ENCODE measurements at regions of chr5 and their contacts with region 1.

Region 1: GRCh38 chr5:43105369-43106289 is 15.1 kb upstream of the ZNF131 start:
- DNase-seq: peak; percentile 98
- H3K4me3 ChIP-seq: peak overlapping the region in 2 of 3 experiments; percentile 20 to 29
- H3K27ac ChIP-seq: no peak overlapping the region
- H3K4me1 ChIP-seq: no peaks in the 10 kb centered on the region
- H3K27me3 ChIP-seq: no peaks in the 10 kb centered on the region
- CTCF ChIP-seq: peak; percentile 100
- POLR2A ChIP-seq: no peak

Region 2: DNA sequence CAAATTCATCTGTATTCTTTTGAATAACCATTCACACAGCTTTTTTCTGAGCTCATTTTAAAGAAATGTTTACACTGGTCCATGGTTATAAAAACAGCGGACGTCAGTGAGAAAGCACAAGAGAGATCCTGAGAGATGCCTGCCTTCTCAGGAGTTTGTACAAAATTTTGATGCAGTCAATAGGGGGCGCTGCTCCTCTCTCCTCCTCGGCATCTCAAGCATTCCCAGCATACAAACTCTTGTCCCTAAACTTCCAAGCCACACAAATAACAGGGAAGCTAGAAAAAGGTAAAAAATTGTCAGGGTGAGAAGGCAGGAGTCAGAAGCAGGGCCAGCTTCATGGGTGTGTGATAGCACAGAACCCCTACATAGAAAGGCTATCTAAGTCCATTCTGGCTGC is 360.2 kb before region 1 on chr5:
- CTCF ChIA-PET with region 1: no interaction called
- POLR2A ChIA-PET with region 1: no interaction called
- dilution Hi-C with region 1: no loop called
- intact Hi-C with region 1: loop called (anchors 10 kb)
- DNase-seq: no peak
- H3K4me3 ChIP-seq: no peak overlapping the region
- H3K27ac ChIP-seq: no peak overlapping the region
- H3K4me1 ChIP-seq: no peaks in the 10 kb centered on the region
- H3K27me3 ChIP-seq: peaks cover 0 to 2% of the 10 kb centered on the region in 2 experiments
- CTCF ChIP-seq: peak; percentile 40 to 49
- POLR2A ChIP-seq: no peak

Region 3: GRCh38 chr5:42994246-42995151 is 111.1 kb before region 1 on chr5:
- CTCF ChIA-PET with region 1: no interaction called
- POLR2A ChIA-PET with region 1: no interaction called
- dilution Hi-C with region 1: no loop called
- intact Hi-C with region 1: loop called (anchors 1 kb)
- DNase-seq: peak; percentile 96
- H3K4me3 ChIP-seq: peak overlapping the region; percentile 59 to 94 (median 61)
- H3K27ac ChIP-seq: peak overlapping the region; percentile 98
- H3K4me1 ChIP-seq: peaks cover 30% of the 10 kb centered on the region
- H3K27me3 ChIP-seq: no peaks in the 10 kb centered on the region
- CTCF ChIP-seq: peak; percentile 85 to 86
- POLR2A ChIP-seq: peak; percentile 52

Region 4: GRCh38 chr5:43073597-43074546 is 31.8 kb before region 1 on chr5:
- CTCF ChIA-PET with region 1: interaction called, 3 read pairs
- POLR2A ChIA-PET with region 1: no interaction called
- dilution Hi-C with region 1: no loop called
- intact Hi-C with region 1: loop called (anchors 1 kb)
- DNase-seq: peak; percentile 34
- H3K4me3 ChIP-seq: no peak overlapping the region
- H3K27ac ChIP-seq: no peak overlapping the region
- H3K4me1 ChIP-seq: peaks cover 13% of the 10 kb centered on the region
- H3K27me3 ChIP-seq: no peaks in the 10 kb centered on the region
- CTCF ChIP-seq: peak; percentile 46 to 54
- POLR2A ChIP-seq: no peak

Region 5: DNA sequence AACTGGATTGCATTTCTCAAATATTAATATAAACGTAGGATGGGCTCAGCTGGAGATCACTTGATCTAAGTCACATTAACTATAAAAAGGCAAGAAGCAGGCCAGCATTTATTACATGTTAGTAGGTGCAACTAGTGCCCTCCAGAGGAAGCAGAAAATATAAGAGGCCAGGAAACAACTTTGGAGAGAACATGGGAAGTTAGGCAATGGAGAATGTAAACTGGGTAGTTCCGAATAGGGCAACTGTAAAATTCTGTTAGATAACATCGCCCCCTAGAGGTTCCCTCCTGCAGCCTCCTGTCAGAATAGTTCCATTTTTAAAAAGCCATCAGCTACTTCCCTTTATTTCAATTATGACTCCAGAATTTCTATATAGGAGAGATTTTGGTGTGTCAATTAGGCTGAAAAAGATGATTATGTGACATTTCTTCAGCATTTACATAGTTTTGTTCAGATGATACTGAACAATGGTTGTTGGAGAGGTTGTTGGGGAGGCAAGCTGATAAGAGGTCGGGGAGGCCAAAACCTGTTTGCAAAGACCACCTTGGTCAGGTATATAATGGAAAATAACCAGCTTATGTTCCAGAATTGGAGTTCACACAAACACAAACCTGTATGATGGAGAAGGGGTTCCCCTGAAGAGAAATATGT is 284.2 kb after region 1 on chr5:
- CTCF ChIA-PET with region 1: interaction called, 14 read pairs
- POLR2A ChIA-PET with region 1: no interaction called
- dilution Hi-C with region 1: no loop called
- intact Hi-C with region 1: loop called (anchors 1 kb)
- DNase-seq: peak; percentile 81
- H3K4me3 ChIP-seq: no peak overlapping the region
- H3K27ac ChIP-seq: no peak overlapping the region
- H3K4me1 ChIP-seq: no peaks in the 10 kb centered on the region
- H3K27me3 ChIP-seq: no peaks in the 10 kb centered on the region
- CTCF ChIP-seq: peak; percentile 72 to 73
- POLR2A ChIP-seq: no peak

Measured in endothelial cell of umbilical vein (primary cell).